ENCODE measurements at regions of chr4 and their contacts with region 1.

Region 1: GRCh38 chr4:3945511-3946290 is 179.5 kb downstream of the ADRA2C start:
- DNase-seq: no peak
- ATAC-seq: no peak
- H3K4me3 ChIP-seq: no peak overlapping the region
- H3K27ac ChIP-seq: no peak overlapping the region
- H3K4me1 ChIP-seq: no peaks in the 10 kb centered on the region
- H3K27me3 ChIP-seq: no peaks in the 10 kb centered on the region
- CTCF ChIP-seq: no peak
- POLR2A ChIP-seq: no peak
- RAD21 ChIP-seq: no peak

Region 2: GRCh38 chr4:3257556-3258482 is 687.9 kb before region 1 on chr4:
- CTCF ChIA-PET with region 1: no interaction called
- POLR2A ChIA-PET with region 1: no interaction called
- dilution Hi-C with region 1: no loop called
- in situ Hi-C with region 1: no loop called
- intact Hi-C with region 1: no loop called
- DNase-seq: peak; percentile 74
- ATAC-seq: peak; percentile 82
- H3K4me3 ChIP-seq: no peak overlapping the region
- H3K27ac ChIP-seq: no peak overlapping the region
- H3K4me1 ChIP-seq: no peaks in the 10 kb centered on the region
- H3K27me3 ChIP-seq: peaks cover 7% of the 10 kb centered on the region
- CTCF ChIP-seq: no peak
- POLR2A ChIP-seq: no peak
- RAD21 ChIP-seq: no peak

Region 3: GRCh38 chr4:3346146-3346545 is 599.6 kb before region 1 on chr4:
- CTCF ChIA-PET with region 1: no interaction called
- POLR2A ChIA-PET with region 1: no interaction called
- dilution Hi-C with region 1: no loop called
- in situ Hi-C with region 1: no loop called
- intact Hi-C with region 1: loop called (anchors 5 kb)
- DNase-seq: peak; percentile 84
- ATAC-seq: peak; percentile 84
- H3K4me3 ChIP-seq: no peak overlapping the region
- H3K27ac ChIP-seq: no peak overlapping the region
- H3K4me1 ChIP-seq: peaks cover 13% of the 10 kb centered on the region
- H3K27me3 ChIP-seq: no peaks in the 10 kb centered on the region
- CTCF ChIP-seq: peak; percentile 98
- POLR2A ChIP-seq: no peak
- RAD21 ChIP-seq: peak; percentile 97

Region 4: DNA sequence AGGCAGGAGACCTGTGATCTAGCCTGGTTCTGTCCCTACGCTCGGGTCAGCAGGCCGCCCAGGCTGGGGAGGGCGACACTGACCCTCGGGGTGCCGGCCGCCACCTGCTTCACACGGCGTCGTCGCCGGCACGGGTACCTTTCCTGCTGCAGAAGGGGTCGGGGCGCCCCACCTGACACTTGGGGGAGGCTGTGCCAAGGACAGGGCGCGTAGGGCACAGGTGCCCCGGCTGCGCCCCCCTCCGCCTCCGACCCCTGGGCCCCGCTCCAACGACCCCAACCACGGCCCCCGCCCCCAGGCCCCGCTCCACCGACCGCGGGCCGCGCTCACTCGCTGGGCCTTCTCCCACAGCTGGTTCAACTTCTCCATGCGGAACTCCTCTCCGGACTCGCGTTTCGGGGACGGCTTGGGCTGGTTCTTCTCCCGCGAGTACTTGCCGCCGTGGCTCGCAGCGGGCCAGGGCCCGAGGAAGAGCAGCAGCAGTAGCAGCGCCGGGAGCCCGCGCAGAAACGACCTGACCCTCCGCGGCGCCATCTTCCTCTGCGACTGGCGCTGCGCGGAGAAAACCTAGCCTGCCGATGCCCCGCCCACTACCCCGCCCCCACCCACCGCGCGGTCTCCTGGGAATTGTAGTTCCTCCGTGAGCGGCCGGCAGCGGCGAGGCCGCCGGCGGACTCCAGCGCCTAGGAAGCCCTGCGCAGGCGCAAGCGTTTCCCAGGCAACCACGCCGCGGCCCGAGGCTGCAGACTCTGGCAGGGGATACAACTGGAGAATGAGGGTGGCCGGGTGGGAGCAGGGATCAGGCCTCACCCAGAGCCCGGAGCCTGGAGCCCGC is 413.6 kb before region 1 on chr4 and contains the start of gene LRPAP1:
- CTCF ChIA-PET with region 1: no interaction called
- POLR2A ChIA-PET with region 1: no interaction called
- dilution Hi-C with region 1: no loop called
- in situ Hi-C with region 1: no loop called
- intact Hi-C with region 1: loop called (anchors 1 kb)
- DNase-seq: peak; percentile 82
- ATAC-seq: peak; percentile 95
- H3K4me3 ChIP-seq: peak within 1 kb of the TSS; percentile 97
- H3K27ac ChIP-seq: peak within 1 kb of the TSS; percentile 71
- H3K4me1 ChIP-seq: peaks cover 10% of the 10 kb centered on the region
- H3K27me3 ChIP-seq: peaks cover 5% of the 10 kb centered on the region; the same call in 1 of the 2 replicates
- CTCF ChIP-seq: no peak
- POLR2A ChIP-seq: peak; percentile 97
- RAD21 ChIP-seq: no peak
- total RNA-seq, gene LRPAP1: 114 and 135 TPM in 2 replicates

Region 5: DNA sequence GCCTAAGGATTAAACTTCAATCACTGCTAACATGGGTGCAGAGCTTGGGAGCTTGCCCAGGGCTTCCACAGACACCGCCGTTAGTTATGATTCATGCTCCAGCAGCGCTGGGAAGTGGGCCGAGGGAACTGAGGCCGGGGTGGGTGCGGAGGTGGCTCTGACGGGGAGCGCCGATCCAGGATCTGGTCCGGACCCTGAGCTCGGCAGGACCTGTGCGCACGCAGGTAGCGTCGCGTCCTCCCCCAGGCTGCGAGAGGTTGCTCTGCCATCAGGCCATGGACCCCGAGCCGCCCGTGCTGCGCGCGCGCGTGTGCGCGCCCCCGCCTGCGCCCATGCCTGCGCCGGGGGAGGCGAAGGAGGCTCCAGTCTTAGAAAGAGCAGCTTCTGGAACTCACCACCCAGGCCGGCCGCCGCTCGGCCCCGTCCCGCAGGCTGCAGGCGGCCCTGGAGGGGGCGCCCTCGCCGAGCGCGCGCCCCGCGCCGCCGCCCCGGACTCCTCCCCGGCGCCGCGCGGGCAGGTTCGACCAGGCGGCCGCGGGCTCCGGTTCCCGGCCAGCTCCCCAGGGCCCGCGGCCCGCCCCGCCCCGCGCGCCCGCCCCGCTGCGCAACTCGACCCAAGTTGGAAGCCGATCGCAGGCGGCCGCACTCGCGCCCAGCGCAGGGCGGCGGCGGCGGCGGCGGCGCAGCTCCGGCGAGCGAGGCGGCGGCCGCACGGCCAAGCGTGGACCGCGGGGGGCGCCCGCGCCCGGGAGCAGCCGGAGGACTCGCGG is 180.2 kb before region 1 on chr4:
- CTCF ChIA-PET with region 1: no interaction called
- POLR2A ChIA-PET with region 1: no interaction called
- dilution Hi-C with region 1: no loop called
- in situ Hi-C with region 1: loop called (anchors 10 kb)
- intact Hi-C with region 1: loop called (anchors 5 kb)
- DNase-seq: peak; percentile 42
- ATAC-seq: peak; percentile 87
- H3K4me3 ChIP-seq: peak overlapping the region; percentile 18; the same call in 1 of the 2 replicates
- H3K27ac ChIP-seq: no peak overlapping the region
- H3K4me1 ChIP-seq: peaks cover 2% of the 10 kb centered on the region; the same call in 1 of the 2 replicates
- H3K27me3 ChIP-seq: peaks cover 58% of the 10 kb centered on the region
- CTCF ChIP-seq: 0 out of 2 replicates have a peak, but pooled peaks have one; percentile 23
- POLR2A ChIP-seq: no peak
- RAD21 ChIP-seq: no peak

Region 6: DNA sequence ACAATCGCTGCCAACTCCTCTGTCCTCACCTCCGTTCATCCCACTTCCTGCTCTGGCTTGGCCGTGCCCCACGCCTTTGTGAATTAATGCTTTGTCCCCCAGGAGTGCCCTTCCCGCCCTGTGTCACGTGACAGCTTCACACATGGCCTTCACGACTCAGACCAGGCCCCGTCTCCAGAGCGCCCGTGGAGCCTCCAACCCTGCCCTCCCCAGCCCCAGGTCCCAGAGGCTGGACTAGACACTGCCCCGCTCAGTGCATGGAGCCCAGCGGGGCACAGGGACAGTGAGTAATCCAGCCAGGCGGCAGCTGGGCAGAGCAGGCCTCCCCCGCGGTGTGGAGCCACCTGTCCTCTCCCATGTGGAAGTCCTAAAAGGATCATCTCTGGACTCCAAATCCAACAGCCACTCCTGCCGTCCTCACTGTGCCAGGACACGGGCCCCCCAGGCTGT is 172.1 kb before region 1 on chr4:
- CTCF ChIA-PET with region 1: no interaction called
- POLR2A ChIA-PET with region 1: no interaction called
- dilution Hi-C with region 1: no loop called
- in situ Hi-C with region 1: loop called (anchors 10 kb)
- intact Hi-C with region 1: loop called (anchors 5 kb)
- DNase-seq: no peak
- ATAC-seq: no peak
- H3K4me3 ChIP-seq: no peak overlapping the region
- H3K27ac ChIP-seq: no peak overlapping the region
- H3K4me1 ChIP-seq: no peaks in the 10 kb centered on the region
- H3K27me3 ChIP-seq: peaks cover 62% of the 10 kb centered on the region
- CTCF ChIP-seq: no peak
- POLR2A ChIP-seq: no peak
- RAD21 ChIP-seq: no peak

Region 7: DNA sequence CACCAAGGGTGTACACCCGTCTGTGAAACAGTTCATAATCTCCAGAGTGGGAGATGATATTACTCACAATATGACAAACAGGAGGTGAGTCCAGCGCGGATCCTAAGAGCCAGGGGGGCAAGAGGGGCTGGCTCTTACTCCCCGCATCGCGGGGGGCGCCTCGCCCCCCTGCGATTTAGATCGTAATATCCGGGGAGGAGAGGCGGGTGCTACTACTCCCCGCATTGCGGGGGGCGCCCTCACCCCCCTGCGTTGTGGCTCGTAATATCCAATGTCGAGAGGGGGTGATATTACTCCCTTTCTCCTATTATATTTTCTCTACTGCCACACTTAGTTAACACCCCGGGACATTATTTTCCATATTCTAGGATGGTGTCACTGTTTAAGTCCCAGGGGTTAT is 47.6 kb before region 1 on chr4:
- CTCF ChIA-PET with region 1: no interaction called
- POLR2A ChIA-PET with region 1: no interaction called
- dilution Hi-C with region 1: no loop called
- in situ Hi-C with region 1: loop called (anchors 10 kb)
- intact Hi-C with region 1: loop called (anchors 5 kb)
- DNase-seq: no peak
- ATAC-seq: no peak
- H3K4me3 ChIP-seq: no peak overlapping the region
- H3K27ac ChIP-seq: no peak overlapping the region
- H3K4me1 ChIP-seq: no peaks in the 10 kb centered on the region
- H3K27me3 ChIP-seq: no peaks in the 10 kb centered on the region
- CTCF ChIP-seq: no peak
- POLR2A ChIP-seq: no peak
- RAD21 ChIP-seq: no peak